Breast epithelium (tissue), 4 donors: ENCODE measurements at regions of chr11 and their contacts with region 1.

Region 1: DNA sequence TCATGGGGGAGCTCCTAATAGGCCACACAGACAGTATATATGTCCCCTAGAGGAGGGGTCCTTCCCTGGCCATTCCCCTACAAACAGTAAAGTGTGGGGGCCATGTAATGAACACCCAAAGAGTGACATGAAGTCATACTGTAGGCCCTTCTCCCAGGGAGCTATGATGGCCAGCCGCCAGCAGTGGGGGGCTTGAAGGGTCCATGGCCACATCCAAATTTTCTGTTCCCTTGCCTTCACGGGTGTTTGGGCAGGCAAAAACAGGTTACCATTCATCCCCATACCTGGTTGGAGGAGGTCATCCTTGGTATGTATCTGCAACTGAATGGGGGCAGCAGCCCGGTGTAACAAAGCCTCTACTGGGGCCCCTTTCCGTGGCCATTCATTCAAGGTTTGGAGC is 2118.0 kb downstream of the LRRC4C start:
- DNase-seq: no peak
- H3K4me3 ChIP-seq: no peak overlapping the region
- H3K27ac ChIP-seq: no peak overlapping the region
- H3K4me1 ChIP-seq: no peaks in the 10 kb centered on the region
- H3K27me3 ChIP-seq: no peaks in the 10 kb centered on the region
- CTCF ChIP-seq: no peak
- POLR2A ChIP-seq: no peak

Region 2: GRCh38 chr11:37630866-37631265 is 1710.6 kb before region 1 on chr11:
- intact Hi-C with region 1: loop called (anchors 5 kb)
- DNase-seq: no peak
- H3K4me3 ChIP-seq: no peak overlapping the region
- H3K27ac ChIP-seq: no peak overlapping the region
- H3K4me1 ChIP-seq: no peaks in the 10 kb centered on the region
- H3K27me3 ChIP-seq: no peaks in the 10 kb centered on the region
- CTCF ChIP-seq: no peak
- POLR2A ChIP-seq: no peak